ENCODE measurements at regions of chr12 and their contacts with region 1.

Region 1: GRCh38 chr12:1661553-1662335 is 29.1 kb upstream of the ADIPOR2 start:
- DNase-seq: peak; percentile 80
- ATAC-seq: peak; percentile 90
- H3K4me3 ChIP-seq: peak overlapping the region; percentile 65
- H3K27ac ChIP-seq: no peak overlapping the region
- H3K4me1 ChIP-seq: no peaks in the 10 kb centered on the region
- H3K27me3 ChIP-seq: no peaks in the 10 kb centered on the region
- CTCF ChIP-seq: no peak

Region 2: DNA sequence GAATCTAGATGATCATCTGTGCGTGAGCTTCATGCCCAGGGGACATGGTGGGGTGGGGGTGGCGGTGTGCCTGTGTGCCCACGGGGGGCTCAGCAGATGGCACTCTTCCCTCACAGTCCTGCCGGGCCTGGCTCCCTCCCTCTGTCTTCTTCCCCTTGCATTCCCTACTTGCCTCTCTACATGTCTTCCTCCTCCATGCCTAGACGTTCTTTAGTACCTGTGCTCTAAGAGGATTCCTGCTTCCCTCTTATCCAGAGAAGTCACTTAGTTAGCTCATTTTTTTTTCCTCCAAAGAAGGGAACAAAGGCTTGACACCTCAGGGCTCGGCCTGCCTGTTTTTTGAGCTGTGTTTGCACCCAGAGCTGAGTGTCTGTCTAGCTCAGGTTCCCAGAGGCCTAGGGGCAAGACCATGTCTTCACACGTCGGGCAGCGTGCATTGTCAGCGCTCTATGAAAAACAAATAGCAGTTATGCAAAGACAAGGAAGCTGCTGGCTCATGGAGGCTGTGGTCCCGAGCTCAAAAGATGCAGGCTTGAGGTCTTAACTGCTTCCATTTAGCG is 1047.3 kb before region 1 on chr12:
- CTCF ChIA-PET with region 1: no interaction called
- POLR2A ChIA-PET with region 1: no interaction called
- intact Hi-C with region 1: no loop called
- DNase-seq: no peak
- ATAC-seq: no peak
- H3K4me3 ChIP-seq: no peak overlapping the region
- H3K27ac ChIP-seq: no peak overlapping the region
- H3K4me1 ChIP-seq: peaks cover 8% of the 10 kb centered on the region
- H3K27me3 ChIP-seq: no peaks in the 10 kb centered on the region
- CTCF ChIP-seq: no peak

Region 3: GRCh38 chr12:1750300-1750699 is 88.6 kb after region 1 on chr12:
- CTCF ChIA-PET with region 1: no interaction called
- POLR2A ChIA-PET with region 1: interaction called, 14 read pairs
- intact Hi-C with region 1: no loop called
- DNase-seq: no peak
- ATAC-seq: no peak
- H3K4me3 ChIP-seq: no peak overlapping the region
- H3K27ac ChIP-seq: no peak overlapping the region
- H3K4me1 ChIP-seq: no peaks in the 10 kb centered on the region
- H3K27me3 ChIP-seq: no peaks in the 10 kb centered on the region
- CTCF ChIP-seq: no peak

Measured in PC-3 (cell line).